ENCODE measurements at regions of chr1 and their contacts with region 1.

Region 1: GRCh38 chr1:202716654-202717053 is 6.4 kb upstream of the SYT2 start:
- DNase-seq: no peak
- ATAC-seq: no peak
- H3K4me3 Mint-ChIP-seq: no peak overlapping the region
- H3K27ac Mint-ChIP-seq: no peak overlapping the region
- H3K4me1 Mint-ChIP-seq: peaks cover 27% of the 10 kb centered on the region
- H3K27me3 Mint-ChIP-seq: peaks cover 3% of the 10 kb centered on the region; the same call in 1 of the 2 replicates
- CTCF ChIP-seq: no peak

Region 2: DNA sequence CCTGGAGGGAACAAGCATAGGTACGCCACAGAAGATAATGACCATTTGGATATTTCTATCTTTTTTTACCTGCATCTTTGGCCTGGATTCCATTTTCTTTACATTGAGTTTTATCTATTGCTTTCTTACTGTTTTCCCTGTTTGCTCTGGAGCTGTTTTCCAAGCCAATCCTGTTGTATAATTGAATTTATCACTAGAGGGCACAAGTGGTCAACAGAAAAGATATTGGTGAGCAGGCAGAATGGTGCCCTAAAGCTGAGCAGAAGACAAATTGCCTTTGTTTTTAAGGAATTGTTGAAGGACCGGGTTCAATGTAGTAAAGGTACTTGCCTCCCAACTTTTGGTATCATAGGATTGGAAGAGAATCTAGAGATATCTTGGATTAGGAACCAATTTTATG is 215.4 kb before region 1 on chr1:
- CTCF ChIA-PET with region 1: interaction called, 17 read pairs
- POLR2A ChIA-PET with region 1: no interaction called
- DNase-seq: no peak
- ATAC-seq: peak; percentile 75
- H3K4me3 Mint-ChIP-seq: no peak overlapping the region
- H3K27ac Mint-ChIP-seq: 0 out of 2 replicates have a peak overlapping the region, but pooled peaks have one; percentile 4
- H3K4me1 Mint-ChIP-seq: peaks cover 7% of the 10 kb centered on the region
- H3K27me3 Mint-ChIP-seq: no peaks in the 10 kb centered on the region
- CTCF ChIP-seq: no peak

Region 3: GRCh38 chr1:202656951-202657646 is 59.6 kb before region 1 on chr1:
- CTCF ChIA-PET with region 1: interaction called, 150 read pairs
- POLR2A ChIA-PET with region 1: interaction called, 3 read pairs
- DNase-seq: peak; percentile 85
- ATAC-seq: peak; percentile 90
- H3K4me3 Mint-ChIP-seq: no peak overlapping the region
- H3K27ac Mint-ChIP-seq: no peak overlapping the region
- H3K4me1 Mint-ChIP-seq: peaks cover 9% of the 10 kb centered on the region; the same call in 1 of the 2 replicates
- H3K27me3 Mint-ChIP-seq: no peaks in the 10 kb centered on the region
- CTCF ChIP-seq: no peak

Region 4: DNA sequence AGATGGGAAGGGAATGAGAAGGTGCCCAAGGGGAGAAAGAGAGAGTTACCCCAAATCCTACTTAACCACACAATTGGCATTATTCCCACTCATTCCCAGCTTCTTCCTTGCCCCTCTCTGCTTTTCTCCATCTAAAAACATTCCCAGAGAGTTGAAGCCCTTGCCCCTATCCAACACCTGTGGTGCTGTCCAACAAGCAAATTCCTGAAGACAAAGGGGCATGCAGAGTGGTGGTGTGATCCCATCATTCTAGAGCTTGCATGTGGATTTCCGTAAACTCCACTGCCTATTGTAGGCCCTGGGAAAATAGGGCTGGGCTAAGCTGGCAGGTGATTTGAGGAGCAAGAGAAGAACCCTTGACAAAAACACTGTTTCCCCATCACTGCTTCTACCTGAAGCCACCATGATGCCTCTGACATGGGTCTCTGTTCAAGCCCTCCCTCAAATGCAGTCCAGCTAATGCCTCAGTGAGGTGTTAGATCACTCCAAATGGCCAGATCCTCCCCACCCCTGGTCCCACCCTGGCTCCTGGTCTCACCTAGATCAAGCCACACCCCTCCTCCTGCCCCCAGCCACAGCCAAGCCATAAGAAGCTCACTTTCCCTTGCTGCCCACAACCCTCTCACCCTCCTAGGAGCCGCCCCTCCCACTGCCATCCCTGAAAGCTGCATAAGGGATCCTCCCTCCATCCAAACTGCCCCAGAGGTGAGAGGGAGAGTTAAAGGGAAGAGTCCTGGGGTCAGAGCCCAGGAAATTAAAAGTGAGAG is 35.9 kb before region 1 on chr1:
- CTCF ChIA-PET with region 1: interaction called, 15 read pairs
- POLR2A ChIA-PET with region 1: interaction called, 3 read pairs
- DNase-seq: peak; percentile 54
- ATAC-seq: peak; percentile 89
- H3K4me3 Mint-ChIP-seq: no peak overlapping the region
- H3K27ac Mint-ChIP-seq: no peak overlapping the region
- H3K4me1 Mint-ChIP-seq: peaks cover 14% of the 10 kb centered on the region
- H3K27me3 Mint-ChIP-seq: no peaks in the 10 kb centered on the region; the same call in 1 of the 2 replicates
- CTCF ChIP-seq: no peak

Region 5: DNA sequence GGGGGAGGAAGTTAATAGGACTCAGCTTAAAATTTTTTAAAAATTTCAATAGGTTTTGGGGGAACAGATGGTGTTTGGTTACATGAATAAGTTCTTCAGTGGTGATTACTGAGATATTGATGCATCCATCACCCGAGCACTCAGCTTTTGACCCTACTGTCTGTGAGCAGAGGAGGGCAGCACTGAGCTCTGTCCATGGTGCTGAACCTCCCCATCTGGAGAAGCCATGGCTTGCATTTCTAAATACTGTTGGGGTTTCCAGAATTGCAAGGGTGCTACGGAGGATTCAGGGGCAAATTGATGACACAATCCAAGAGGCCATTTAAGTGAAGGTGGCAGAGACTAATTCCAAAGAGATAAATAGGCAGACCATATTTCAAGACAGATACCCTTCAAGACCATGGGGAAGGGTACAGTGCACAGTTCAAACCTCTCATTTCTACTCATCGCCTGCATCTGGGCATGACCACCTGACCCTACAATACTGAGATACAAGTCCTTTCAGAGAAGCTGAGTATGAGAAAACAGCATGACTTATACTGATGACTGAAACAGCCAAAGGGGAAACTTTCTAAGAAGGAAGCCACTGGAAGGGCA is 23.6 kb before region 1 on chr1:
- CTCF ChIA-PET with region 1: interaction called, 13 read pairs
- POLR2A ChIA-PET with region 1: no interaction called
- DNase-seq: peak; percentile 90
- ATAC-seq: peak; percentile 81
- H3K4me3 Mint-ChIP-seq: no peak overlapping the region
- H3K27ac Mint-ChIP-seq: no peak overlapping the region
- H3K4me1 Mint-ChIP-seq: peaks cover 5% of the 10 kb centered on the region; the same call in 1 of the 2 replicates
- H3K27me3 Mint-ChIP-seq: no peaks in the 10 kb centered on the region
- CTCF ChIP-seq: no peak

Region 6: GRCh38 chr1:202704601-202705000 is 12.1 kb before region 1 on chr1:
- CTCF ChIA-PET with region 1: interaction called, 39 read pairs
- POLR2A ChIA-PET with region 1: interaction called, 5 read pairs
- DNase-seq: no peak
- ATAC-seq: no peak
- H3K4me3 Mint-ChIP-seq: no peak overlapping the region
- H3K27ac Mint-ChIP-seq: no peak overlapping the region
- H3K4me1 Mint-ChIP-seq: peaks cover 20% of the 10 kb centered on the region
- H3K27me3 Mint-ChIP-seq: peaks cover 13% of the 10 kb centered on the region
- CTCF ChIP-seq: no peak

Region 7: DNA sequence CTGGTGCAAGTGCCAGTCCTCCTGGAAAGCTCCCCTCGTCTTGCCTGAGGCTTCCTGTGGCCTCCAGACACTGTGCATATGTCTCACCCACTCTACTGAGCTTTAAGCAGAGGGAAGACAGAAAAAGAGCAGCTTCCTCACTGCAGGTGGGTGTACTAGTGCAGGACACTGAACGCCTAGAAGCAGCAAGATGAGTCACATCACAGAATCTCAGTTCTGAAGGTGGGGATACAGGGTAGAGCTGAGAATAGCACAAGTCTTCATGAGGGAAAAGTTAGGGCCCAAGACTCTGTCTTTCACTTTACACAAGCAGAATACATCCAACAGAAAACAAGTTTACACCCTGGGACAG is 131.5 kb after region 1 on chr1:
- CTCF ChIA-PET with region 1: no interaction called
- POLR2A ChIA-PET with region 1: no interaction called
- DNase-seq: no peak
- ATAC-seq: no peak
- H3K4me3 Mint-ChIP-seq: no peak overlapping the region
- H3K27ac Mint-ChIP-seq: no peak overlapping the region
- H3K4me1 Mint-ChIP-seq: peaks cover 15% of the 10 kb centered on the region; the same call in 1 of the 2 replicates
- H3K27me3 Mint-ChIP-seq: no peaks in the 10 kb centered on the region
- CTCF ChIP-seq: no peak

Measured in WTC11 (cell line).